BJ (cell line): ENCODE measurements at regions of chr7 and their contacts with region 1.

Region 1: GRCh38 chr7:115060095-115060870 is 138.4 kb downstream of the MDFIC start:
- DNase-seq: no peak
- H3K4me3 ChIP-seq: no peak overlapping the region
- H3K27me3 ChIP-seq: no peaks in the 10 kb centered on the region
- CTCF ChIP-seq: no peak

Region 2: DNA sequence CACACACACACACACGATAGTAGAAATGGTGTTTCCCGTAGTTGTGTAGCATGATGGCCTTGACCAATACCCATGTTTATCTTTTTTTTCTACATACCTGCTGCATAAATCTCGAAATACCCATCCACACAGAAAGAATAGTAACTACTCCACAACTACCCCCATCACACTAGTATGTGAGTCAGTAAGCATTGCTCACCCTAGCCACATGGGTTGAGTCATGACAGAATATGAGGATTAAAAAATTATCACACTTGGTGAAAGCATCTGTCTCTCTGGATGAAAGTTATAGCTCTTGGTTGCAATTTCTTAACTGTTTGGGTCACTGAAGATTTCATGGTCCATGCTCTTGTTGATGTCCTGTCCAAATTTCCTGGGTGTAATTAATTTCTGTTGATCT is 241.8 kb before region 1 on chr7:
- CTCF ChIA-PET with region 1: no interaction called
- POLR2A ChIA-PET with region 1: interaction called, 11 read pairs
- DNase-seq: no peak
- H3K4me3 ChIP-seq: no peak overlapping the region
- H3K27me3 ChIP-seq: no peaks in the 10 kb centered on the region
- CTCF ChIP-seq: no peak